CD4-positive, alpha-beta memory T cell (primary cell): ENCODE measurements at regions of chr6 and their contacts with region 1.

Region 1: GRCh38 chr6:106444777-106445507 is 84.4 kb downstream of the CRYBG1 start:
- DNase-seq: peak in 4 of 5 donors; percentile 68 to 77 (median 72)
- H3K4me3 ChIP-seq: no peak overlapping the region
- H3K4me3 Mint-ChIP-seq: no peak overlapping the region
- H3K27ac ChIP-seq: no peak overlapping the region
- H3K27ac Mint-ChIP-seq: no peak overlapping the region
- H3K4me1 ChIP-seq: peaks cover 5% of the 10 kb centered on the region
- H3K4me1 Mint-ChIP-seq: peaks cover 4 to 13% (median 11%) of the 10 kb centered on the region in 4 donors
- H3K27me3 ChIP-seq: no peaks in the 10 kb centered on the region
- H3K27me3 Mint-ChIP-seq: peaks cover 11 to 19% of the 10 kb centered on the region in 2 donors

Region 2: DNA sequence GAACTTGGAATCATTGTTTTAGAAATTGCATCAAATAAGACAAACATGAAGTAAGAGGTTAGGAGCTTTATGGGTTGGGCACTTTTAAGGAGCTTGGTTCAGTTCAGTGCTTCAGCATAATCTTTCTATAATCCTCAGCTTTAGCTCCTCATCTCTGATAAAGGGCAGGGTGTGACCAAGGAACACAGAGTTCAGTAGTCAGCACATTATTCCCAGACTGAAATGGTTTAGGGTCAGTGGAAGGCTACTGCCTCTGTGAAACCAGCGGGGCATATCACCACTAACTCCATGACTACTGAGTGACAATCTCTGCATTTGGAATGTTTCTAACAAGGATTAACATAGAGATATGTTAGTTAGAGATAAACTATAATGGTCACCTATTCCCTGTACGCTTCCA is 47.5 kb before region 1 on chr6:
- CTCF ChIA-PET with region 1: no interaction called
- POLR2A ChIA-PET with region 1: no interaction called
- intact Hi-C with region 1: no loop called
- DNase-seq: no peak
- H3K4me3 ChIP-seq: no peak overlapping the region
- H3K4me3 Mint-ChIP-seq: no peak overlapping the region
- H3K27ac ChIP-seq: no peak overlapping the region
- H3K27ac Mint-ChIP-seq: no peak overlapping the region
- H3K4me1 ChIP-seq: no peaks in the 10 kb centered on the region
- H3K4me1 Mint-ChIP-seq: no peaks in the 10 kb centered on the region
- H3K27me3 ChIP-seq: peaks cover 4% of the 10 kb centered on the region
- H3K27me3 Mint-ChIP-seq: peaks cover 4 to 17% of the 10 kb centered on the region in 2 donors

Region 3: DNA sequence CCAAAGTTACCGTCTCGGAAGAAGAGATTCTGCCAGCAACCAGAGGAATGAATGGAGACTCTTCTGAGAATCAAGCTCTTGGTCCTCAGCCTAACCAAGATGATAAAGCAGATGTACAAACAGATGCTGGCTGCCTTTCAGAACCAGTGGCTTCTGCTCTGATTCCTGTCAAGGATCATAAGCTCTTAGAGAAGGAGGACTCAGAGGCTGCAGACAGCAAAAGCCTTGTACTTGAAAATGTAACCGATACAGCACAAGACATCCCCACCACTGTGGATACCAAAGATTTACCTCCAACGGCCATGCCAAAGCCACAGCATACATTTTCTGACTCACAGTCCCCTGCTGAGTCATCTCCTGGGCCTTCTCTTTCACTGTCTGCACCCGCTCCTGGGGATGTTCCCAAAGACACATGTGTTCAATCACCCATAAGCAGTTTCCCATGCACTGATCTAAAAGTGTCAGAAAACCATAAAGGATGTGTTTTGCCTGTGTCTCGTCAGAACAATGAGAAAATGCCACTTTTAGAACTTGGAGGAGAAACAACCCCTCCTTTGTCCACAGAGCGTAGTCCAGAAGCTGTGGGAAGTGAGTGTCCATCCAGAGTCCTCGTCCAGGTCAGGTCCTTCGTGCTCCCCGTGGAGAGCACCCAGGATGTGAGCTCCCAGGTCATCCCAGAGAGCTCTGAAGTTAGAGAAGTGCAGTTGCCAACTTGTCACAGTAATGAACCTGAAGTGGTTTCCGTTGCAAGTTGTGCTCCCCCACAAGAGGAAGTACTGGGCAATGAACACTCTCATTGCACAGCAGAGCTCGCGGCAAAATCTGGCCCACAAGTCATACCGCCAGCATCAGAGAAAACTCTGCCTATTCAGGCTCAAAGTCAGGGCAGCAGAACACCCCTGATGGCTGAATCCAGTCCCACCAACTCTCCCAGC is 74.8 kb after region 1 on chr6:
- CTCF ChIA-PET with region 1: interaction called, 4 read pairs
- POLR2A ChIA-PET with region 1: no interaction called
- intact Hi-C with region 1: loop called (anchors 2 kb)
- DNase-seq: peak; percentile 76 to 95 (median 79)
- H3K4me3 ChIP-seq: peak overlapping the region; percentile 58 to 61
- H3K4me3 Mint-ChIP-seq: peak overlapping the region; percentile 92 to 98 (median 94)
- H3K27ac ChIP-seq: peak overlapping the region; percentile 78
- H3K27ac Mint-ChIP-seq: peak overlapping the region; percentile 94 to 98 (median 98)
- H3K4me1 ChIP-seq: peaks cover 66% of the 10 kb centered on the region
- H3K4me1 Mint-ChIP-seq: peaks cover 34 to 74% (median 46%) of the 10 kb centered on the region in 4 donors
- H3K27me3 ChIP-seq: no peaks in the 10 kb centered on the region
- H3K27me3 Mint-ChIP-seq: no peaks in the 10 kb centered on the region

Region 4: DNA sequence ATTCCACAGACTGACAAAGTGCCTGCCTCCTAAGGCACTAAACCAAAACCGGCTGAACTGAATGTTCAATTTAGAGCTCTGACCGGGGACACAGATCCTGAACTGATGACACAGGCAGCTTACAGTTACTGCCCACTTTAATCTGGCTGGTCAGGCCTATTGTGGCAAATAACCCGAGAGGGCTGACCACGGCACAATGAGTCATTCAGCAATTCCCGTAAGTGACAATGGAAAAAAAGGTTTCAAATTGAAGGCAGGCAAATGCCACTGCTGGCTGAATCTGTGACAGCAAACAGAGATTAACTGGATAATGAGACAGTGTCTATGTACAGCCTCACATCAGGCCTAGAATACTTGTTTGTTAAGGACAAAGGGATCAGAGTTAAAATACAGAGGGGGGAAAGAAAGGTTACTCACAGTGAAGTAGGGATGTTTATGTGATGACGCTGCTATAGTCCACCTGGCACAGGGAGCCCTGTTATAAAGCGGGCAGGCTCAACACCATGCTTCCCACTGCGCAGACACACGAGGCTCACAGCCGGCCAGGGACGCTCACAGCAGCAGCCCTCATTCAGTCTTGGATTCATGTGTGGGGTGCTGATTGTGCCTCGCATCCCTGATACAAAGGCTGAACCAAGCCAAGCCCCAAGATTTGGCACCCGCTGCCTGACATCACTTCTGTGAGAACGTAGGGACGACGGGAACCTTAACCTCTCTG is 130.0 kb after region 1 on chr6:
- CTCF ChIA-PET with region 1: interaction called, 341 read pairs
- POLR2A ChIA-PET with region 1: no interaction called
- intact Hi-C with region 1: no loop called
- DNase-seq: no peak
- H3K4me3 ChIP-seq: no peak overlapping the region
- H3K4me3 Mint-ChIP-seq: no peak overlapping the region
- H3K27ac ChIP-seq: no peak overlapping the region
- H3K27ac Mint-ChIP-seq: peak overlapping the region in 1 of 7 donors; percentile 9
- H3K4me1 ChIP-seq: no peaks in the 10 kb centered on the region
- H3K4me1 Mint-ChIP-seq: no peaks in the 10 kb centered on the region
- H3K27me3 ChIP-seq: no peaks in the 10 kb centered on the region
- H3K27me3 Mint-ChIP-seq: no peaks in the 10 kb centered on the region

Region 5: GRCh38 chr6:106997390-106998158 is 552.6 kb after region 1 on chr6:
- CTCF ChIA-PET with region 1: interaction called, 8 read pairs
- POLR2A ChIA-PET with region 1: no interaction called
- intact Hi-C with region 1: loop called (anchors 1 kb)
- DNase-seq: peak in 4 of 5 donors; percentile 29 to 43 (median 36)
- H3K4me3 ChIP-seq: no peak overlapping the region
- H3K4me3 Mint-ChIP-seq: no peak overlapping the region
- H3K27ac ChIP-seq: no peak overlapping the region
- H3K27ac Mint-ChIP-seq: peak overlapping the region in 1 of 7 donors; percentile 3
- H3K4me1 ChIP-seq: no peaks in the 10 kb centered on the region
- H3K4me1 Mint-ChIP-seq: peaks cover 0 to 6% (median 1%) of the 10 kb centered on the region in 4 donors
- H3K27me3 ChIP-seq: no peaks in the 10 kb centered on the region
- H3K27me3 Mint-ChIP-seq: peaks cover 2 to 3% of the 10 kb centered on the region in 2 donors